ENCODE measurements at regions of chr22 and their contacts with region 1.

Region 1: GRCh38 chr22:35930933-35931332 is 97.7 kb downstream of the RBFOX2 start:
- ATAC-seq: peak; percentile 57 to 91 (median 78)
- H3K4me3 ChIP-seq: no peak overlapping the region
- H3K27ac ChIP-seq: no peak overlapping the region
- H3K4me1 ChIP-seq: no peaks in the 10 kb centered on the region

Region 2: GRCh38 chr22:36065775-36066559 is 135.0 kb after region 1 on chr22:
- in situ Hi-C with region 1: loop called in 1 of 9 experiments (anchors 25 kb)
- ATAC-seq: peak; percentile 90 to 97 (median 94)
- H3K4me3 ChIP-seq: peak overlapping the region; percentile 27 to 35 (median 30)
- H3K27ac ChIP-seq: peak overlapping the region; percentile 70 to 76
- H3K4me1 ChIP-seq: peaks cover 3 to 5% of the 10 kb centered on the region in 2 donors

Region 3: DNA sequence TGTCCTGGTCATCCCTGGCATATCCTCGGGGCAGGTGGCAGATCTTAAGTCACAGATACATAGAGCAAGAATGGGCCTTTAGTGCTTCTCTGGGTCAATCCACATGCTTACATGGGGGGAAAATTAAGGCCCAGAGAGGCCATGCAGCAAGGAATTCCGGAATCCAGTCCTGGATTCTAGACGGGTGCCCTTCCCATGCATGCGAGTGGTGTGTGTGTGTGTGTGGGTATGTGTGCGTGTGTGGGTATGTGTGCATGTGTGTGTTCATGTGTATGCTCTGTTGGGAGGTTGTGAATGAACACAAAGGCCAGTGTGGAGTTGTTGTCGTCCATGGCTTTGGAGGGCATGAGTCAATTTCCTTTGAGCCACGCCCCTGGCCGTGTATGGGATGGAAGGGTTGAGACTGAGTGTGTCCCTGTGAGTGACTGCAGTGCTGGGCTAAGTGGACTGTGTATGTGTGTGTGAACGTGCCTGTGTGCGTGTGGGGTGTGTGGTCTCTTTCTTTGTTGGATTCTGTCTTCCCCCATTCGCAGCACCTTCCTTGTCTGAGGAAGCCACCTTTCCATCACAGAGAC is 631.4 kb after region 1 on chr22:
- in situ Hi-C with region 1: no loop called
- ATAC-seq: peak in 7 of 8 experiments; percentile 24 to 90 (median 48)
- H3K4me3 ChIP-seq: no peak overlapping the region
- H3K27ac ChIP-seq: no peak overlapping the region
- H3K4me1 ChIP-seq: no peaks in the 10 kb centered on the region

Region 4: DNA sequence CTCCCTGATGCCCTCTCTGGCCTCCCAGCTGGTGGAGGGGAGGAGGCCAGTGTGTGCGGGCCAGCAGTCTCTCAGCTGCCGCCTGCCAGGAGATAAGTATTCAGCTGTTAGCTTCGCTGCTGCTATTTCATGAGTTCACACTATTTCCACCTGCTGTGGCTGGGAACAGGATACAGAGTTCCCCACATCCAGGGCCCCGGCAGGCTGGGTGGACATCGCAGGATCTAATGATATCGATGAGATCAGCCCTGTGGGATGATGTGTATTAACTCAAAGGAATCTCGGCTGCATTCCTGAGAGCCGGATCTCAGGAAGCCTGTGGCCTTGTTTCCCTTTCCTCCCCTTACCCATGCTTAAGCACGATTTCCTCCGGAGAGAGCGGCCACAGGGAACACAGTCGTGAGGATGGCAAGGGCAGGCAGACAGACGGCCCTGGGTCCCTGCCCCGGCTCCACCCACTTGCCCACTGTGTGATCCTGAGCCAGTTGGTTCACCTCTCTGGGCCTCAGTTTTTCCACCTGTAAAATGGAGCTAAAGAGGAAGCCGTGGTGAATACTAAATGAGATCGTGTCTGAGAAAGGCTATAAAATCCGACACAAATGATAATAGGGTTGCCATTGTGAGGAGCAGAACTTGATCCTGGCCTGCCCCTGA is 892.4 kb after region 1 on chr22:
- in situ Hi-C with region 1: no loop called
- ATAC-seq: peak in 1 of 8 experiments; percentile 26
- H3K4me3 ChIP-seq: no peak overlapping the region
- H3K27ac ChIP-seq: no peak overlapping the region
- H3K4me1 ChIP-seq: no peaks in the 10 kb centered on the region

Measured in motor neuron (in vitro differentiated cells).